Heart left ventricle (tissue), 16 donors: ENCODE measurements at regions of chr19 and their contacts with region 1.

Region 1: GRCh38 chr19:18152444-18152816 is 533 bp upstream of the PIK3R2 start:
- DNase-seq: peak; percentile 95 to 98 (median 97)
- ATAC-seq: peak; percentile 55 to 77 (median 74)
- H3K4me3 ChIP-seq: peak overlapping the region; percentile 81 to 98 (median 94)
- H3K27ac ChIP-seq: peak overlapping the region; percentile 86 to 99 (median 95)
- H3K4me1 ChIP-seq: peaks cover 8 to 47% (median 27%) of the 10 kb centered on the region in 12 donors
- H3K27me3 ChIP-seq: no peaks in the 10 kb centered on the region
- CTCF ChIP-seq: peak; percentile 37 to 79 (median 58)
- POLR2A ChIP-seq: no peak

Region 2: GRCh38 chr19:18007044-18007916 is 145.2 kb before region 1 on chr19:
- intact Hi-C with region 1: loop called in 1 of 10 experiments (anchors 10 kb)
- DNase-seq: peak; percentile 80 to 93 (median 84)
- ATAC-seq: peak; percentile 73 to 93 (median 86)
- H3K4me3 ChIP-seq: peak overlapping the region; percentile 47 to 84 (median 61)
- H3K27ac ChIP-seq: peak overlapping the region; percentile 79 to 93 (median 86)
- H3K4me1 ChIP-seq: peaks cover 0 to 47% (median 20%) of the 10 kb centered on the region in 12 donors
- H3K27me3 ChIP-seq: peaks cover 0 to 1% (median 0%) of the 10 kb centered on the region in 9 donors
- CTCF ChIP-seq: peak; percentile 95 to 99 (median 99)
- POLR2A ChIP-seq: peak in 1 of 2 donors; percentile 53

Region 3: GRCh38 chr19:18192673-18193387 is 40.4 kb after region 1 on chr19 and contains the start of gene MPV17L2:
- intact Hi-C with region 1: loop called in 1 of 10 experiments (anchors 1 kb)
- DNase-seq: peak; percentile 100
- ATAC-seq: peak; percentile 94 to 99 (median 96)
- H3K4me3 ChIP-seq: peak within 1 kb of the TSS; percentile 40 to 99 (median 84)
- H3K27ac ChIP-seq: peak within 1 kb of the TSS; percentile 78 to 99 (median 94)
- H3K4me1 ChIP-seq: peaks cover 0 to 25% (median 14%) of the 10 kb centered on the region in 12 donors
- H3K27me3 ChIP-seq: no peaks in the 10 kb centered on the region
- CTCF ChIP-seq: no peak
- POLR2A ChIP-seq: peak; percentile 82 to 89
- total RNA-seq, gene MPV17L2: 10.6 to 37.4 (median 14.8) TPM

Region 4: DNA sequence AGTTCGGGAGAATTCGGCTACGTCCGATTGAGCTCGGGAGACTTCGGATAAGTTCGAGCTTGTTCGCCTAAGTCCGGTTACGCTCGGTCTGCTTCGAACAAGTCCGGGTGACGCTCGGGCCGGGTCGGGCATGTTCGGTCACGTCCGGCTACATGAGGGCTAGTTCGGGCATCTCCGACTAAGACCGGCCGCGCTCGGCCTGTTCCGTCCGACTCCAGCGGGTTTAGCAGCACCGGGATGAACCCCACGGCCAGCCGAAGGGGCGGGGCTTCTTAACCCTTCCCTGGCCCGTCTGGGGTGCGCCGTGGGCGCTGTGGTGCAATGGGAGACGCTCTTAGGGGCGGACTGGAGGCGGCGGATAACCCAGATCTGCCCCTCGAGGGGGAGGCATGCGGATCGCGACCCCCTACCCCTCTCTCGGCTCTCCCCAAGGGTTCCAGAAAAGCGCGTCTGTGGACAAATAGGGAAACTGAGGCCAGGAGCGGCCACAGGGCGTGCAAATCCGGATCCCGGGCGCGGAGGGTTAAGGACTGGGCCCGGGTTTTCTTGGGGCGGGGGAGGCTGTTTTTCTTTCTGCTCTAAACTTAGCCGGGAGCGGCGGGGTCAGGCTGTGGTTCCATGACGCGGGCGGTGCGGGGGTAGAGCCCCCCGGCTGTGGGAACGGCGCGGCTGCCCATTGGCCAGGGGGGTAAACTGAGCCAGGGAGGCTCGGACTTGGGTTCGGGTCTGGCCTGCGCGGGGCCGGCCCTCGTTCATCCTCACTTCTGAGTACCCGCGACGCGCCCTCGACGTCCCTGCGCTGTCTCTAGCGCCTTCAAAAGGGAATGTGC is 72.3 kb after region 1 on chr19:
- intact Hi-C with region 1: loop called in 2 of 10 experiments (anchors 1 to 5 kb)
- DNase-seq: peak; percentile 97 to 99 (median 98)
- ATAC-seq: peak; percentile 98 to 99 (median 98)
- H3K4me3 ChIP-seq: peak overlapping the region; percentile 9 to 64 (median 50)
- H3K27ac ChIP-seq: peak overlapping the region; percentile 36 to 93 (median 69)
- H3K4me1 ChIP-seq: peaks cover 0 to 44% (median 22%) of the 10 kb centered on the region in 12 donors
- H3K27me3 ChIP-seq: peaks cover 18 to 67% (median 24%) of the 10 kb centered on the region in 9 donors
- CTCF ChIP-seq: no peak
- POLR2A ChIP-seq: peak in 1 of 2 donors; percentile 7